Endothelial cell of umbilical vein (primary cell): ENCODE measurements at regions of chr11 and their contacts with region 1.

Region 1: GRCh38 chr11:111777094-111778046 is 11.2 kb upstream of the PPP2R1B start:
- DNase-seq: peak; percentile 75
- H3K4me3 ChIP-seq: no peak overlapping the region
- H3K27ac ChIP-seq: no peak overlapping the region
- H3K4me1 ChIP-seq: no peaks in the 10 kb centered on the region
- H3K27me3 ChIP-seq: no peaks in the 10 kb centered on the region
- CTCF ChIP-seq: peak; percentile 62 to 63
- POLR2A ChIP-seq: no peak

Region 2: GRCh38 chr11:111399187-111400031 is 378.0 kb before region 1 on chr11:
- CTCF ChIA-PET with region 1: no interaction called
- POLR2A ChIA-PET with region 1: no interaction called
- dilution Hi-C with region 1: no loop called
- intact Hi-C with region 1: no loop called
- DNase-seq: no peak
- H3K4me3 ChIP-seq: no peak overlapping the region
- H3K27ac ChIP-seq: no peak overlapping the region
- H3K4me1 ChIP-seq: no peaks in the 10 kb centered on the region
- H3K27me3 ChIP-seq: no peaks in the 10 kb centered on the region
- CTCF ChIP-seq: no peak
- POLR2A ChIP-seq: no peak

Region 3: DNA sequence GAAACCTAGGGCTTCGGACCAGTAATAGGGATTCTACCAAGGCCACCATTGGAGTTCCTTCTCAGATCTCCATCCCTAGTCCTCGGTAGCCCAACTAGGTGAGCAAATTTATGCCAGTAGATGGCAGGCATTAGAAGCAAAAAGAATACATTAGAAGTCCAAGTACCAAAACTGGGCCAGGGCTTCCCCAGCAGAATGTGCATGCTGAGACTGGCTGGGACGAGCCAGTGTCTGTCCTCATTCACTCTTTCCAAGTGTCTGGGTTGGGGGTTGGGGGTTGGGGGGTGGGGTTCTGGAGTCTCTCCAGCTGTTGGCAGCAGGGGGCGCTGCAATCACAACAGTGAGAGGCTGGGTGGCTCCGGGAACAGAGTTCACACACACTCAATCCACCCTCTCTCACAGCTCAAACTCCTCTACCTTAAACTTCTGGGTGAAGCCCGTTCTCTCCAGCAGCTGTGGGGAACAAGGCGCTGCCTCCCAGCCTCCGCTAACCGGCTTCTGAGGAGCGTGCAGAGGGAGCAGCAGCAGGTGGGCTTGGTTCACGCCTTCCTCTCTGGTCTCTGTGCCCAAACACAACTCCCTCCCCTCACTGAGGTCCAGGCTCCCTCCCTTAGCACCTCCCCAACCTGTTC is 322.7 kb before region 1 on chr11:
- CTCF ChIA-PET with region 1: no interaction called
- POLR2A ChIA-PET with region 1: no interaction called
- dilution Hi-C with region 1: no loop called
- intact Hi-C with region 1: loop called (anchors 2 kb)
- DNase-seq: peak; percentile 8
- H3K4me3 ChIP-seq: no peak overlapping the region
- H3K27ac ChIP-seq: no peak overlapping the region
- H3K4me1 ChIP-seq: no peaks in the 10 kb centered on the region
- H3K27me3 ChIP-seq: no peaks in the 10 kb centered on the region
- CTCF ChIP-seq: peak; percentile 9 to 55
- POLR2A ChIP-seq: no peak

Region 4: DNA sequence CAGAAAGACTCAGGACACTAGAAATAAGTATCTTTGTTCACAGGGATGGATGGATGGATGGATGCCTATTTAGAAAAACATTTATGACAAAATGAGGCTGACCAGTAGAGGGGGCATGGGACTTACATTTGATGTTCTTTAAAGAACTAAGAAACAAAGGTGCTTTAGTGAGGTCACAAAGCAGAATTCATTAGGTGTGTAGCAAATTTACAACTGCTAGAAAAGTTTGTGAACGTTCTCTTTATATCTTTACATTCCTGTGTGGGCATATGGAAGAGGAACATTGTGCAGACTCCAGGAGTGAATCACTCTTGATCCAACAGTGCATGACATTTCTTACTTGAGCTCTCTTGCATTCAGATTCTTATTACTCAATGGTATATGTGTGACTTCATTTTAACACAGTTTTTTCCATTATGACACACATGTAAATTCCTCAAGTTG is 191.0 kb before region 1 on chr11:
- CTCF ChIA-PET with region 1: interaction called, 75 read pairs
- POLR2A ChIA-PET with region 1: no interaction called
- dilution Hi-C with region 1: no loop called
- intact Hi-C with region 1: loop called (anchors 1 kb)
- DNase-seq: peak; percentile 59
- H3K4me3 ChIP-seq: no peak overlapping the region
- H3K27ac ChIP-seq: no peak overlapping the region
- H3K4me1 ChIP-seq: peaks cover 8% of the 10 kb centered on the region
- H3K27me3 ChIP-seq: peaks cover 0 to 2% of the 10 kb centered on the region in 2 experiments
- CTCF ChIP-seq: peak; percentile 38 to 49
- POLR2A ChIP-seq: no peak

Region 5: DNA sequence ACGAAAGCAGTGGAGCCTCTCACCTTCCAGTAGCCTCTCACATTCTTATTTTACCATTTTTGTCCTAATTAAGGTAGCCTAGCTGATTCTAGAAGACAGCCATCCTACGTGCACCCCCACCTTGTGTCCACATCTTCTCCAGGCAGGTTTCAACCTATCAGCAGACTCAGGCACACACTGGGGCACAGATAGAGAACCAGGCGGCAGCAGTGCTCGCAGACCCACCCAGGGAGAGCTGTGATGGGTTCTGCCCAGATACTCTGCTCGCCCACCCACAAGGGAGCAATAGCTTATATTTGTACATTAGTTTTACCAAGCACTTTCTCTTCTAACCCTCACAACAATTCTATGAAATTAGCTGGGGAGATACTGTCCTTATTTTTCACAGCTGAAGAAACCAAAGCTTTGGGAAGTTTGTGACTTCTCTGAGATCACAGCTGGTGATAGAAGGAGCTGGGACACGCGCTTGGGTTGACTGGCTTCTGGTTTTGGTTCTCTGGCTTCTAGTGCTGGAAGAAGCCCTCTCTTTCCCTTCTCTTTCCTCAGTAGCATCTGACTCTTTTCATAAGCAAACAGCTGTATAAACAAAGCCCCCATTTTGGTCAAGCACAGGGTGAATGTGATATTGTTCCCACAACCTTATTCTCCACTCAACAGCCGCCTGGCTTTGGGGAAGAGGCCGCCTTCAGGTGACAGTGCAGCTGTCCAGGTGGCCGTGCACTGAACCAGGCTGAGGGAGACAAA is 48.1 kb before region 1 on chr11:
- CTCF ChIA-PET with region 1: interaction called, 19 read pairs
- POLR2A ChIA-PET with region 1: no interaction called
- dilution Hi-C with region 1: no loop called
- intact Hi-C with region 1: no loop called
- DNase-seq: peak; percentile 78
- H3K4me3 ChIP-seq: no peak overlapping the region
- H3K27ac ChIP-seq: no peak overlapping the region
- H3K4me1 ChIP-seq: peaks cover 29% of the 10 kb centered on the region
- H3K27me3 ChIP-seq: no peaks in the 10 kb centered on the region
- CTCF ChIP-seq: no peak
- POLR2A ChIP-seq: no peak

Region 6: DNA sequence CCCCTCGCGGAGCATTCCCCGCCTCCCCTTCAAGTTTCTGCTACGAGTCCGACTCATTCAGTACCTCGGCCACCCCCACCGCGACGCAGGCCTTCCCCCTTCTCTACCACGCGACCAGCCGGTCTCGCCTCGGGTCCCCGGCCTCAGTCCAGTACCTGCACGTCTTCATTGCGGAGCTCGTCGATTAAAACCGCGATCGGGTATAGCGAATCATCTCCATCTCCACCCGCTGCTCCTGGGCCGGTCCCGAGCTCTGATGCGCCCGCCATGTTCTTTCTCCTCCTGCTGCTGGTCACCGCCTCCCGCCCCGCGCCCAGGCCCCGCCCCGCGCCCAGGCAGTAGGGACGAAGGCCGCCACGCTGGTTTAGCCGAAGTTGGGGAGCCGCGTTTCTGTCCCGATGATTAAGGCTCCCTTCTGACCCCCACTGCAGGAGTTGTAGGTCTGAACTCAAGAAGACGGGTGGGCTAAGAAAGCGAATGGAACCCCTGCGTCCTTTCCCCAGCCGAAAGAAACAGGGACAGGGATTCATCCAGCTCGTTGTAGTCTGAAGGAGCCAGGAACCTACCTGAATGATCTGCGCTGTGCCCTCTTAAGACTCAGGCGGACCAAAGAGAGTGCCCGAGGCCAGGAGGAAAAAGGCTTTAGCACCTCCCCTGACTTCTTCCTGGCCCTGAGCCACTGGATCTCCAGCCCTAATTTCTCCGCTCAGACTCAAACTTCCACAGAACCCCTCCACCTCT is 11.1 kb before region 1 on chr11 and contains the start of gene PPP2R1B:
- CTCF ChIA-PET with region 1: interaction called, 82 read pairs
- POLR2A ChIA-PET with region 1: no interaction called
- dilution Hi-C with region 1: no loop called
- intact Hi-C with region 1: no loop called
- DNase-seq: peak; percentile 83
- H3K4me3 ChIP-seq: peak within 1 kb of the TSS; percentile 68 to 85 (median 73)
- H3K27ac ChIP-seq: peak within 1 kb of the TSS; percentile 51
- H3K4me1 ChIP-seq: peaks cover 15% of the 10 kb centered on the region
- H3K27me3 ChIP-seq: no peaks in the 10 kb centered on the region
- CTCF ChIP-seq: no peak
- POLR2A ChIP-seq: peak; percentile 16
- total RNA-seq, gene PPP2R1B: 42.7 and 50.8 TPM in 2 replicates

Region 7: DNA sequence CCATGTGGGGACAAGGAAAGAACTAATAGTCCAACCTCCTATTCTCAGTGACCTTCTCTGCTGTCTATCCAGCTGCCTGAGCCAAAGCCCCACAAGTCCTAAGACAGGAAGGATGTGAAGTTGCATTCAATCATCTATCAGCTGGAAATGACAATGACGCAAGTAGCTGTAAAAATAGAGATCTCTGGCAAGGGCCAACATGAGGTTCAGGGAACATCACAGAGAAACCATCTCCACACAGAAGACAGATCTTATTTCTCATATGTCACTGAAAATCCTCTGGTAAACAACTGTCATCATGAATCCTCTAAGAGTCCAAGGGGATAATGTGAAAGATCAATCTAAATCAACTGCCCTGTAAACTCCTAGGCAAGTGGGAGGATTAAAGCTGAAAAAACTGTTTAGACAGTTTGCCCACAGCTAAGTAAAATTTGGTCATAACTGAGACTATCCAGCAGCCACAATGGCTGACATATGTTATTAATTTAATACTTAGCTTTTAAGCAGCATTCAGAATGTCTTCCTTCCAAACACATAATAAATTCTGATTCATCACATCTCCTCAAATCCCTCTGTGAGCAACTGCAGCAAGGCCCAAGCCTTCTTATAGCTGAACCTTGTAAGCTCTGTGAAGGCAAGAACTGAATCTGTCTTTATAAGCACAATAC is 41.9 kb after region 1 on chr11:
- CTCF ChIA-PET with region 1: interaction called, 14 read pairs
- POLR2A ChIA-PET with region 1: no interaction called
- dilution Hi-C with region 1: no loop called
- intact Hi-C with region 1: no loop called
- DNase-seq: peak; percentile 60
- H3K4me3 ChIP-seq: no peak overlapping the region
- H3K27ac ChIP-seq: peak overlapping the region; percentile 62
- H3K4me1 ChIP-seq: peaks cover 19% of the 10 kb centered on the region
- H3K27me3 ChIP-seq: no peaks in the 10 kb centered on the region
- CTCF ChIP-seq: no peak
- POLR2A ChIP-seq: no peak

Region 8: GRCh38 chr11:111841370-111842053 is 64.1 kb after region 1 on chr11:
- CTCF ChIA-PET with region 1: interaction called, 23 read pairs
- POLR2A ChIA-PET with region 1: no interaction called
- dilution Hi-C with region 1: no loop called
- intact Hi-C with region 1: loop called (anchors 1 kb)
- DNase-seq: peak; percentile 86
- H3K4me3 ChIP-seq: no peak overlapping the region
- H3K27ac ChIP-seq: no peak overlapping the region
- H3K4me1 ChIP-seq: peaks cover 10% of the 10 kb centered on the region
- H3K27me3 ChIP-seq: no peaks in the 10 kb centered on the region
- CTCF ChIP-seq: peak; percentile 76 to 84
- POLR2A ChIP-seq: no peak

Region 9: GRCh38 chr11:111918390-111919258 is 141.3 kb after region 1 on chr11 and contains the start of gene C11orf52:
- CTCF ChIA-PET with region 1: no interaction called
- POLR2A ChIA-PET with region 1: no interaction called
- dilution Hi-C with region 1: no loop called
- intact Hi-C with region 1: no loop called
- DNase-seq: peak; percentile 61
- H3K4me3 ChIP-seq: no peak within 1 kb of the TSS
- H3K27ac ChIP-seq: no peak within 1 kb of the TSS
- H3K4me1 ChIP-seq: peaks cover 17% of the 10 kb centered on the region
- H3K27me3 ChIP-seq: no peaks in the 10 kb centered on the region
- CTCF ChIP-seq: no peak
- POLR2A ChIP-seq: no peak
- total RNA-seq, gene C11orf52: 0.31 and 0.99 TPM in 2 replicates

Region 10: GRCh38 chr11:112113539-112114457 is 336.4 kb after region 1 on chr11:
- CTCF ChIA-PET with region 1: no interaction called
- POLR2A ChIA-PET with region 1: no interaction called
- dilution Hi-C with region 1: no loop called
- intact Hi-C with region 1: no loop called
- DNase-seq: peak; percentile 39
- H3K4me3 ChIP-seq: no peak overlapping the region
- H3K27ac ChIP-seq: no peak overlapping the region
- H3K4me1 ChIP-seq: no peaks in the 10 kb centered on the region
- H3K27me3 ChIP-seq: no peaks in the 10 kb centered on the region
- CTCF ChIP-seq: peak; percentile 41 to 65
- POLR2A ChIP-seq: no peak